ENCODE measurements at regions of chr10 and their contacts with region 1.

Region 1: DNA sequence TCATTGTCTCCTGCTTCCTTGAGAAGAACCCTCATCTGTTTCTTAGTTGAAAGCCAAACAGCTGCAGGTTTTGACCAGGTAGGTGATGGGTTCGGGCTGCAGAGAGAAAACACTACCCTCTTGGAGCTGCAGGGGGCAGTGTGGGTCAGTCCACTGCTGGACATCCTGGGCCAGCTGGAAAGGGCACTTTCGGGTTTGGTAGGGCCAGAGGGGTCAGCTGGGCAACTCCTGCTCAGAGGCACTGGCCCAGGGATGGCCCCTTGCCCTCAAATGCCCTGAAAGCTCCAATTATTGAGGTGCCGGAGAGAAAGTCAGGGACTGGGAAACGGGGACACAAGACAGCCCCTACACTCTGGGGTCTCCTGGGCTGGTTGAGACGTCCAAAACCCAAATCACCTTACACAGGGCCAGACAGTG is 90.7 kb downstream of the MKI67 start:
- DNase-seq: peak; percentile 76
- H3K4me3 Mint-ChIP-seq: no peak overlapping the region
- H3K27ac Mint-ChIP-seq: no peak overlapping the region
- H3K4me1 Mint-ChIP-seq: no peaks in the 10 kb centered on the region
- H3K27me3 Mint-ChIP-seq: peaks cover 36% of the 10 kb centered on the region

Region 2: DNA sequence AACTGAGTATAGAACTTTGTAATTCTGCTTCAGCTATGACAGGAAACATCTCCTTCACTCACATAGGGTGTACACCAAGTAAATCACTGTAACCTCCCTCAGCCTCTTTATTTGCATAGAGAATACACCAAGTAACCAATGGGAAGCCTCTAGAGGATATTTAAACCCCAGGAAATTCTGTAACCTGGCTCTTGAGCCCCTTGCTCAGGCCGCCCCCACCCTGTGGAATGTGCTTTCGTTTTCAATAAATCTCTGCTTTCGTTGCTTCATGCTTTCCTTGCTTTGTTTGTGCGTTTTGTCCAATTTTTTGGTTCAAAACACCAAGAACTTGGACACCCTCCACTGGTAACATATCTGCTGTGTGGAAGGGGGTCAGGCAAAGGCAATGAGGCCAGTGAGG is 203.1 kb before region 1 on chr10:
- CTCF ChIA-PET with region 1: no interaction called
- DNase-seq: no peak
- H3K4me3 Mint-ChIP-seq: no peak overlapping the region
- H3K27ac Mint-ChIP-seq: no peak overlapping the region
- H3K4me1 Mint-ChIP-seq: no peaks in the 10 kb centered on the region
- H3K27me3 Mint-ChIP-seq: peaks cover 4% of the 10 kb centered on the region

Region 3: DNA sequence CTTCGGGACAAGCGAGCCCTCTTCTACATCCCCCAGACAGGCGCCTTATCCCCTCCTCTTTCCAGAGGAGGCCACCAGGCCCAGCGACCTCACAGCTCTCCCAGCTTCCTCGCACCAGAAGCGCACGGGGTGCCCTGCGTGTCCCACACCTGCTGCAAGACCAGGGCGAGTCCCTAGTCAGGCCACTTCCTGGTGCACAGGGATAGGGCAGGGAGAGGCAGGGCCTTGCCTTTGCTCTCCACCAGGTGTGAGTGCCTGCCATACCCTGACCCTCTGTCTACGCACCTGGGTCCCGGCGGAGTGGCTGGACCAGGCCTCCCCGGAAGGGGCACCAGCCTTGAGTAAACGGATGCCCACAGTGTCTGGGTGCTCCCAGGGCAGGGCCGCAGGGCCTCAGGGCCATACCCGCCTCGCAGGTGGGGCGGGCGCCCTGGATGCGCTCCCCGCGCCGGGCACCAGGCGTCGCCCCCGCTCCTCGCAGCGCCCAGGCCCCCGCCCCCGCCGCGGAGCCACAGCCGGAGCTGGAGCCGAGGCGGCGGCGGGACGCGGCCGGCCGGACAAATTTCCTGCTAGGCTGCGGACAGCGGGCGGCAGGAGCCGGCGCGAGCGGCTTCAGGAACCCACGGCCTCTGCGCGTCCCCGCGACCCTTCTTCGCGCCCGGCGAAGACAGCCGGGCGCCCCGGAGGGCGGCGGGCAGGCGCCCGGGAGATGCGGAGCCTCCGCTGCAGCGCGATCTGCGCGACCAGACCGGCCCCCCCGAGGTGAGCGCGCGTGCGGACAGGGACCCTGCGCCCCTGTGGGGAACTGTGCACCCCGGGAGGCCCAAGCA is 128.8 kb before region 1 on chr10 and contains the start of gene PTPRE:
- CTCF ChIA-PET with region 1: interaction called, 21 read pairs
- DNase-seq: peak; percentile 68
- H3K4me3 Mint-ChIP-seq: no peak within 1 kb of the TSS
- H3K27ac Mint-ChIP-seq: no peak within 1 kb of the TSS
- H3K4me1 Mint-ChIP-seq: no peaks in the 10 kb centered on the region
- H3K27me3 Mint-ChIP-seq: peaks cover 64% of the 10 kb centered on the region

Region 4: GRCh38 chr10:128016423-128017060 is 19.0 kb before region 1 on chr10:
- CTCF ChIA-PET with region 1: interaction called, 12 read pairs
- DNase-seq: peak; percentile 14
- H3K4me3 Mint-ChIP-seq: no peak overlapping the region
- H3K27ac Mint-ChIP-seq: no peak overlapping the region
- H3K4me1 Mint-ChIP-seq: peaks cover 11% of the 10 kb centered on the region
- H3K27me3 Mint-ChIP-seq: peaks cover 6% of the 10 kb centered on the region

Region 5: GRCh38 chr10:128069351-128070051 is 33.9 kb after region 1 on chr10:
- CTCF ChIA-PET with region 1: interaction called, 288 read pairs
- DNase-seq: peak; percentile 87
- H3K4me3 Mint-ChIP-seq: no peak overlapping the region
- H3K27ac Mint-ChIP-seq: peak overlapping the region; percentile 45
- H3K4me1 Mint-ChIP-seq: peaks cover 46% of the 10 kb centered on the region
- H3K27me3 Mint-ChIP-seq: no peaks in the 10 kb centered on the region

Region 6: DNA sequence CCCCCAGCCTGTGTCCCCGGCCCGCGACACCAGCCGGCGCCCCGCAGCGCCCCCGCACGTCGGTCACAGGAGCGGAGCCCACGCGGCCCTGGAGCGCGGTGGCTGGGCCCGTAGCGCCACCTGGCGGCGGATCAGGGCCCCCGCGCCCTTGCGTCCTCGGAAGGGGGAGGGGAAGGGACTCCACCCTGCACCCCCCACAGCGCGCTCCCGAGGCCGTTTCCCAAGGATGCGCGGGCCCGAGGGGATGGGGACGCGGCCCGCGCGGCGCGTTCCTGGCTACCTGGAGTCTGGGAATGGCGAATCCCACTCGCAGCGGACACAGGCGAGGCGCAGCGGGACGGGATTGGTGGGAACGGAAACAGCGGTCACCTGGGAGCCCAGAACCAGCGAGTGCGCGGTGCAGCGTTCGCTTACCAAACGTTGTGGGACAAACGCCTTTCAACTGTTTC is 114.5 kb after region 1 on chr10:
- CTCF ChIA-PET with region 1: interaction called, 18 read pairs
- DNase-seq: peak; percentile 85
- H3K4me3 Mint-ChIP-seq: peak overlapping the region; percentile 66
- H3K27ac Mint-ChIP-seq: no peak overlapping the region
- H3K4me1 Mint-ChIP-seq: peaks cover 9% of the 10 kb centered on the region
- H3K27me3 Mint-ChIP-seq: peaks cover 59% of the 10 kb centered on the region

Measured in activated naive CD4-positive, alpha-beta T cell treated with anti-CD3 and anti-CD28 coated beads, Interleukin-2, amount 10 ng/mL, durations not matched to agents 7 days and 5 days (primary cell).